PC-9 (cell line): ENCODE measurements at regions of chr2 and their contacts with region 1.

Region 1: DNA sequence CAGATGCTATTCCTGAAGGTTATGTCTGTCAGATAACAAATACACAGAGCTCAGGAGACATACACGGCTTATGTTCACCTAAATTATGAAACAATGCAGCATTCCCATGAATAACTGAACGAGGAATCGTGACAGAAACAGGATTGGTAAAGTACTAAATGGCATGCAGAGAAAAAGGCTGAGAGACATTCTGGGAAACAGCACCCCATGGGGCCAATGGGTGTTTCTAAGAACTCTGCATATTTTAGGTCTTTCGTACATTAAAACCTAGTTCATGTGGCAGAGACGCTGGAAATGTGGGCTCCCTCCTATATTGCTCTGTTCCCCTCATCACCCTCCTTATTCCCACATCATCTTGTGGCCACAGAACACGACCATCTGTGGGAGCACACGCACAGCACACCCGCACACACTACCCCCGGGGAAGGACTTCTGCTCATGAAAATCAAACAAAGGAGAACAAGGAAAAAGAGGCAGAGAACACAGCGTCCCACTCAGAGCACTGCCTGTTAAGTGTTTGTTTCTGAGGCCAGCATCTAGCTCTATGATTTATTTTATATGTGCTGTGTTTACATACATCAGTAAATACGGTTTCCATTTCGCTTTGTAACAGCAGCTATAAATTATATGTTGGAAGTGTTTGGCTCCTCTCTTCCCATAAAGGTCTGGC is 143.6 kb downstream of the AFF3 start:
- DNase-seq: no peak
- H3K4me3 ChIP-seq: no peak overlapping the region
- H3K27ac ChIP-seq: no peak overlapping the region
- H3K4me1 ChIP-seq: no peaks in the 10 kb centered on the region
- H3K27me3 ChIP-seq: peaks cover 75% of the 10 kb centered on the region
- CTCF ChIP-seq: no peak

Region 2: GRCh38 chr2:99609826-99610381 is 388.9 kb before region 1 on chr2:
- CTCF ChIA-PET with region 1: no interaction called
- POLR2A ChIA-PET with region 1: interaction called, 19 read pairs
- intact Hi-C with region 1: no loop called
- DNase-seq: peak in 1 of 2 experiments; percentile 50
- H3K4me3 ChIP-seq: no peak overlapping the region
- H3K27ac ChIP-seq: no peak overlapping the region
- H3K4me1 ChIP-seq: no peaks in the 10 kb centered on the region
- H3K27me3 ChIP-seq: peaks cover 70% of the 10 kb centered on the region
- CTCF ChIP-seq: no peak

Region 3: GRCh38 chr2:100126201-100126600 is 127.4 kb after region 1 on chr2:
- CTCF ChIA-PET with region 1: no interaction called
- POLR2A ChIA-PET with region 1: no interaction called
- intact Hi-C with region 1: no loop called
- DNase-seq: no peak
- H3K4me3 ChIP-seq: no peak overlapping the region
- H3K27ac ChIP-seq: no peak overlapping the region
- H3K4me1 ChIP-seq: no peaks in the 10 kb centered on the region
- H3K27me3 ChIP-seq: peaks cover 63% of the 10 kb centered on the region
- CTCF ChIP-seq: no peak